ENCODE measurements at regions of chr10 and their contacts with region 1.

Region 1: GRCh38 chr10:31864834-31865518 is 63.7 kb downstream of the ARHGAP12 start:
- DNase-seq: no peak

Region 2: DNA sequence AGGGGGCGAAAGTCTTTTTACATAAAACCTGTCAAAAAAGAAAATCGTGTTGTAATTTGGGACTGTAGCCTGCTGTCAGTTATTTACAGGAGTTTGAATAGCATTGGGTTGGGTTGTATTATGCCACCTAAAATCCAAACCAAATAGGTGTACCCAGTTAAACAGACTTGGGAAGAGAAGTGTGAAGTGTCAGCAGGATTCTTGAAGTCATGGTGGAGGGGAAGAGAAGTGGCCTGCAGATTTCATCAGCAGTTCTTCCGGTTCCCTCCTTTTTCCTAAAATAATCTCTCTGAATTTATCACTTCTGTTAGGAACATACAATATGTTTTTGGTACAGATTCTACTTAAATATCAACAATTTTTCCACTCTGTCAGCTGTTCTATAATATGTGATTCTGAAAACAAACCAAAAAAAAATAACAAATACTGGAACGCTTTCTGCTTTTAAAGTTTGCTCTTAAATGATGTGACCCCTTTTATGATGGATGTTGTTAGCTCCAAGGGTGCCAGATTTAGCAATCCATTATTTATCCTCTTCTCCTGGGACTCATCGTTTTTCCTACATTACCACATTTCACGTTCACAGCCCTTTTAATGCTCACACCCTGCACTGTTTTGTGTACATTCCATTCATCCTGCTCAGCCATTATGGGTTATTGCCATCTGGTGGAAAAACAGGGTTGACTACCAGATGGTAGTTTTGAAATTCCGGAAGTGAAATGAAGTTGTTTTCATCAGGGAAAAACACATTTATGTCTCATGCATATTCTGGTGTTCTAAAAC is 82.4 kb after region 1 on chr10:
- intact Hi-C with region 1: loop called (anchors 5 to 10 kb)
- DNase-seq: no peak

Region 3: GRCh38 chr10:32190890-32191491 is 326.0 kb after region 1 on chr10:
- intact Hi-C with region 1: loop called in 1 of 2 experiments (anchors 10 kb)
- DNase-seq: no peak